CD8-positive, alpha-beta memory T cell (primary cell): ENCODE measurements at regions of chr2 and their contacts with region 1.

Region 1: GRCh38 chr2:64644177-64645004 is 9.3 kb downstream of the SERTAD2 start:
- DNase-seq: peak in 4 of 5 donors; percentile 24 to 71 (median 59)
- H3K4me3 ChIP-seq: peak overlapping the region; percentile 63
- H3K4me3 Mint-ChIP-seq: peak overlapping the region; percentile 80 to 94 (median 89)
- H3K27ac ChIP-seq: peak overlapping the region; percentile 81
- H3K27ac Mint-ChIP-seq: peak overlapping the region; percentile 41 to 97 (median 86)
- H3K4me1 ChIP-seq: peaks cover 77% of the 10 kb centered on the region
- H3K4me1 Mint-ChIP-seq: peaks cover 69 to 97% (median 88%) of the 10 kb centered on the region in 3 donors
- H3K27me3 ChIP-seq: no peaks in the 10 kb centered on the region
- H3K27me3 Mint-ChIP-seq: peaks cover 0 to 2% of the 10 kb centered on the region in 2 donors

Region 2: DNA sequence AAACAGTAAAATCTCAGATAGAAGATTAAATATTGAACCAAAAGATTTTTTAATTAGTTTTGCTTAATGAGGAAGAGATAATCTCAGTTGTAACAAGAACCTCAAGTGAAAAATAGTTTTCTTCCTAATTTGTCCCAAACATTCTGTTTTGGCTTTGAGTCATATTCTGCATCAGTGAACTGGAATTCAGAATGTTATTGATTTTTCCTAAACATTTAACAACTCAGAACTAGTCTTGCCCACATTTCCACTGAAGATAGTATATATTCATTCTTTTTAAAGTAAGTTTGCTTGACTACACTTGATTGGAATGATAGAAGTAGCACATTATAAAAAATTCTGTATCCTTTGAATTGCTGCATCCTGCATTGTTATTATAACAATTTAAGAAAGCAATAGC is 888.4 kb before region 1 on chr2:
- CTCF ChIA-PET with region 1: no interaction called
- POLR2A ChIA-PET with region 1: no interaction called
- DNase-seq: no peak
- H3K4me3 ChIP-seq: no peak overlapping the region
- H3K4me3 Mint-ChIP-seq: no peak overlapping the region
- H3K27ac ChIP-seq: no peak overlapping the region
- H3K27ac Mint-ChIP-seq: no peak overlapping the region
- H3K4me1 ChIP-seq: no peaks in the 10 kb centered on the region
- H3K4me1 Mint-ChIP-seq: no peaks in the 10 kb centered on the region
- H3K27me3 ChIP-seq: peaks cover 4% of the 10 kb centered on the region
- H3K27me3 Mint-ChIP-seq: peaks cover 7 to 38% of the 10 kb centered on the region in 2 donors

Region 3: GRCh38 chr2:64474121-64474571 is 170.2 kb before region 1 on chr2:
- CTCF ChIA-PET with region 1: no interaction called
- POLR2A ChIA-PET with region 1: no interaction called
- DNase-seq: no peak
- H3K4me3 ChIP-seq: no peak overlapping the region
- H3K4me3 Mint-ChIP-seq: no peak overlapping the region
- H3K27ac ChIP-seq: no peak overlapping the region
- H3K27ac Mint-ChIP-seq: no peak overlapping the region
- H3K4me1 ChIP-seq: no peaks in the 10 kb centered on the region
- H3K4me1 Mint-ChIP-seq: no peaks in the 10 kb centered on the region
- H3K27me3 ChIP-seq: no peaks in the 10 kb centered on the region
- H3K27me3 Mint-ChIP-seq: peaks cover 4 to 5% of the 10 kb centered on the region in 2 donors

Region 4: DNA sequence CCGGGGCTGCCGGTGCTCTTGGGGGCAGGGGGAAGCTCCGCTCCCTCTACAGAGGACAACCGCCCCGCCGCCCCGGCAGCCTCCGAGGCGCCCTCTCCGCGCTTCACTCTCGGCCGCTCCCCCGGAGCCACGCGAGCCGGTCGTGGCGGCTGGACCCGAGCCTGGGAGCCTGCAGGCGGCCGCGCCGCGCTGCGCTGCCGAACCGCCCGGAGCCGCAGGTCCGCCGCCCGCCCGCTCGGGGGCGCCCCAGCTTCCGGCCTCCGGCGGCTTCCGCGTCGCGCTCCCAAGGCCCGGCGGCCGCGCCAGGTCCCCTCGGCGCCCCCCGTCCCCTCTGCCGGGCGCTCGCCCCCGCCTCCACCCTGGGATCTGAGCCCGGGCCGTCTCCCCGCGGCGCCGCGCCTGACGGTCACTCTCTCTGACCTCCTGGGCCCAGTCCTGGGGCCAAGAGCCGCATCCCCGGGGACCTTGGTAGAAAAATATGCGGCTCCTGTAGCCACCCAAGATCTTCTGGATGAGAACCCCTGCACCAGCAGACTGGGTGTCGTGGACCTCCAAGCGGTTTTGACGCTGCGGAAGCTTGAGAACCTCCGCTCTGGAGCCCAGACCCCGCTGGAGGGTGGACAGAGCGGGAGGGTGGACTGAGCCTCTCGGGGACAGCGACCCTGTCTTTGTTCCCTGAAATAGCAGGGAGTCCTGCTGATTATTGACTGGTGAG is 35.0 kb before region 1 on chr2:
- CTCF ChIA-PET with region 1: interaction called, 49 read pairs
- POLR2A ChIA-PET with region 1: no interaction called
- DNase-seq: peak; percentile 58 to 76 (median 73)
- H3K4me3 ChIP-seq: peak overlapping the region; percentile 76
- H3K4me3 Mint-ChIP-seq: peak overlapping the region; percentile 68 to 91 (median 77)
- H3K27ac ChIP-seq: peak overlapping the region; percentile 75
- H3K27ac Mint-ChIP-seq: peak overlapping the region in 7 of 8 donors; percentile 30 to 90 (median 68)
- H3K4me1 ChIP-seq: peaks cover 28% of the 10 kb centered on the region
- H3K4me1 Mint-ChIP-seq: peaks cover 20 to 40% (median 29%) of the 10 kb centered on the region in 3 donors
- H3K27me3 ChIP-seq: no peaks in the 10 kb centered on the region
- H3K27me3 Mint-ChIP-seq: no peaks in the 10 kb centered on the region

Region 5: DNA sequence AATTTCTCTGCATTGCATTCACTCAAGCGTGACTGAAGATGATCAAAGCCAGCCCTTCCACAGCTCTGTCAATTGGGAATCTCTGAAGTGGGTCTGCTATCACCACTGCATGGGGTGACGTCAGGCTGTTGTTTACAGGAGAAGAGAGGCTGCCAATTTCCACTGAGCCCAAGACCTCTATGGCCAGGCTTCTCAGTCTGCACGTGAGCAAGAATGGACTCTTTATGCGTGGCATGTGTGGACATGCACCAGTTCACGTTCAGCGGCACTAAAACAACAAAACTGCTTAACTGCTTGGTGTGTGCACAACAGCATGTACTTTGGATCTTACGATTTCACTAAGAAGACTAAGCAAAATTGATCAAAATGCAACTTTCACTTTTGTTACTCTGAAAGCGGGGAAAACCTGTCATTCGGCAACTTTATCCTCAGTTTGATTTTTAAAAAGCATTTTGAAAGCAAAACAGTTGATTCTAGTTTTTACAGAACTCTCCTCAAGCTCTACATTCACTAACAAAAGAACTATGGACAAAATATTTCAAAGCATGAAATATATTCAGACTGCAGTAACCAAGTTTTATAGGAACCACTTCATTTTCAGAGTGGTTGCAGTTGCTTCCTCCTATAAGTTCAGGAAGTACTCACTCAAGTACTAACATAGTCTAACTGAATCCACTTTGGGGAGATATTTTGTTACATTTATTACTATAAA is 86.3 kb after region 1 on chr2:
- CTCF ChIA-PET with region 1: interaction called, 10 read pairs
- POLR2A ChIA-PET with region 1: interaction called, 8 read pairs
- DNase-seq: peak; percentile 6 to 63 (median 38)
- H3K4me3 ChIP-seq: peak overlapping the region; percentile 70
- H3K4me3 Mint-ChIP-seq: peak overlapping the region; percentile 85 to 94 (median 88)
- H3K27ac ChIP-seq: peak overlapping the region; percentile 60
- H3K27ac Mint-ChIP-seq: peak overlapping the region; percentile 87 to 99 (median 96)
- H3K4me1 ChIP-seq: peaks cover 44% of the 10 kb centered on the region
- H3K4me1 Mint-ChIP-seq: peaks cover 39 to 58% (median 48%) of the 10 kb centered on the region in 3 donors
- H3K27me3 ChIP-seq: no peaks in the 10 kb centered on the region
- H3K27me3 Mint-ChIP-seq: no peaks in the 10 kb centered on the region

Region 6: DNA sequence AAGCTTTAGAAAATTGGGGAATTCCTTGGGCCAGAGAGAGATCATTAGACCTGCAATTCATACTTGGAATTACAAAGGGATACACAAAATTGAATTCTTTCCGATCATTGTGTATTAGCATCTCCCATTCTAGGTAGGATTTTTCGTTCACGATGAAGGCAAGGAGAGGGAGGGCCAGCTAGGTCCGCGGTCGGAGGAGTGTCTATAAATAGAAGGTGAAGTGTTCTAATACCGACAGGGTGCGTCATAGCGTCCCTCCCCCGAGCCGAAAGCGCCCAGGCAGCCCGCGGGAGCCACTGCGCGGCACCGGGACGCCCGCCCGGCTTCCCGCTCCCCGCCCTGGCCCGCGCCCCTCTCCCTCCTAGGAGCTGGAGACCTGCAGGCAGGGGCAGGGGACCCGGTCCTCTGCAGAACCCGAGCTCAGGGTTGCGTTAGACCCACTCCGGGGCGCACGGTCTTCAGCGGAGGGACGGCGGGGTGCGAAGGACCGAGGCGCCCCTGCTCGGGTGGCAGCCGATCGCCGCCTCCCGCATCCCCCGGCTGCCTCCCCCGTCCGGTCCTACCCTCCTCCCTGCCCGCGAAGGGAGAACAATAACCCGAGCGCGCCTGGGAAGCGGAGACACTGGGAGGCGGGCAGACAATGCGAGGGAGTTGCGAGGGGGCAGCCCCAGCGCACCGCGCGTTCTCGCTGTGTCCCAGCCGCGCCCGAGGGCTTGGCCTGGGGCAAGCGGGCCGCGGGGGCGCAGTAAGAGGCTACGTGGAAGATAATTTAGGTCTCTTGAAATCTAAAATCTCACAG is 123.5 kb after region 1 on chr2:
- CTCF ChIA-PET with region 1: interaction called, 15 read pairs
- POLR2A ChIA-PET with region 1: interaction called, 6 read pairs
- DNase-seq: peak; percentile 57 to 87 (median 68)
- H3K4me3 ChIP-seq: peak overlapping the region; percentile 74
- H3K4me3 Mint-ChIP-seq: peak overlapping the region; percentile 87 to 95 (median 90)
- H3K27ac ChIP-seq: peak overlapping the region; percentile 71
- H3K27ac Mint-ChIP-seq: peak overlapping the region; percentile 58 to 97 (median 92)
- H3K4me1 ChIP-seq: peaks cover 10% of the 10 kb centered on the region
- H3K4me1 Mint-ChIP-seq: peaks cover 16 to 22% (median 21%) of the 10 kb centered on the region in 3 donors
- H3K27me3 ChIP-seq: no peaks in the 10 kb centered on the region
- H3K27me3 Mint-ChIP-seq: no peaks in the 10 kb centered on the region

Region 7: GRCh38 chr2:64865073-64865830 is 220.9 kb after region 1 on chr2:
- CTCF ChIA-PET with region 1: interaction called, 20 read pairs
- POLR2A ChIA-PET with region 1: no interaction called
- DNase-seq: peak; percentile 48 to 74 (median 70)
- H3K4me3 ChIP-seq: peak overlapping the region; percentile 63
- H3K4me3 Mint-ChIP-seq: peak overlapping the region in 5 of 7 donors; percentile 74 to 91 (median 79)
- H3K27ac ChIP-seq: no peak overlapping the region
- H3K27ac Mint-ChIP-seq: peak overlapping the region in 3 of 8 donors; percentile 71 to 80 (median 74)
- H3K4me1 ChIP-seq: peaks cover 8% of the 10 kb centered on the region
- H3K4me1 Mint-ChIP-seq: peaks cover 0 to 4% (median 0%) of the 10 kb centered on the region in 3 donors
- H3K27me3 ChIP-seq: no peaks in the 10 kb centered on the region
- H3K27me3 Mint-ChIP-seq: peaks cover 7% of the 10 kb centered on the region in 2 donors